Left cardiac atrium (tissue), 4 donors: ENCODE measurements at regions of chr6 and their contacts with region 1.

Region 1: DNA sequence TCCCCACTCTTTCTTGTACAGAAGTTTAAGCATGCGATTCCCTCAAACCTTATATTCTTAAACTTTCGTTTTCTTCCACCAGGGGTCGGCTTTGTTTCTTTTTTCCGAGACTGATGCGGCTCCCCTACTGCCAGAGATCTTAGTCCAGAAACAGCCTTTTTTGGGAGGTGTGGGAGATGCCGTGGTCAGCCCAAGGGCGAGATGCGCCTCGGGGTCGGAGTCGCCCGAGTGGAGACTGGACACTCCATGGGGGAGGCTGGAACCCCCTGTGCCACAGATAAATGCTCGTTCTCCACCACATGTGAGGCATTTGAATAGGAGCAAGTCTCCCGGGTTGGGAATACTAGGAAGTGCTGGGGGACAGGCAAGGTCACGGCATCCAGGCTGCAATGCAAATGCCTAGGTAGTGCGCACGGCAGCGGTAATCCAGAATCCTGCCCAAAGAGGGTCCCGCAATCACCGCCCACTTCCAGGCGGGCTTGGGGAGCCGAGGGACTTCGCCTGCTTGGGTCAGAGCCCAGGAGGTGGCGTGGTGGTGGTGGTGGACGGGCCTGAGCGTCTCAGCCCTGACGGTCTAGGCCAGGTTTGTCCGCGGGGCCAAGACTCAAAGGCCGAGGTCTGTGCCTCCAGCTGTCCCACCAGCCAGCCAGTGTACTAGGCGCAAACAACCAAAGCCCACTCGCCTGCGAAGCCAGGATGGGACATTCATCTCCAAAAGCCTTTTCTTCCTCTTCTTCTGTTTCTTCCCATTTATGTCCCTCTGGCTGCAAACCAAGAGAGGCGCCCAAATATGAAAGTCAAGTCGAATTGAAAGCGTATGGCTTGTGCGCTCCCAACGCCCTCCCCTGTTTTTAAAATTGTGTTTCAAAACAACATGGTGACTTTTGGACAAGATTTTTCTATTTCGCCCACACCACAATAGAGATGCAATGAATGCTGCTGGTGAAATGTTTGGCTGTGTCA is 39.3 kb upstream of the OSTM1 start:
- DNase-seq: no peak
- ATAC-seq: peak; percentile 29 to 40

Region 2: GRCh38 chr6:108492131-108492766 is 378.4 kb after region 1 on chr6:
- intact Hi-C with region 1: loop called in 1 of 2 experiments (anchors 2 kb)
- DNase-seq: no peak
- ATAC-seq: peak in 1 of 2 donors; percentile 62